ENCODE measurements at regions of chr6 and their contacts with region 1.

Region 1: GRCh38 chr6:26607434-26608230 is 10.9 kb downstream of the ABT1 start:
- DNase-seq: peak; percentile 51
- H3K4me3 Mint-ChIP-seq: peak overlapping the region; percentile 28
- H3K27ac Mint-ChIP-seq: no peak overlapping the region
- H3K4me1 Mint-ChIP-seq: peaks cover 16% of the 10 kb centered on the region
- H3K27me3 Mint-ChIP-seq: peaks cover 16% of the 10 kb centered on the region

Region 2: DNA sequence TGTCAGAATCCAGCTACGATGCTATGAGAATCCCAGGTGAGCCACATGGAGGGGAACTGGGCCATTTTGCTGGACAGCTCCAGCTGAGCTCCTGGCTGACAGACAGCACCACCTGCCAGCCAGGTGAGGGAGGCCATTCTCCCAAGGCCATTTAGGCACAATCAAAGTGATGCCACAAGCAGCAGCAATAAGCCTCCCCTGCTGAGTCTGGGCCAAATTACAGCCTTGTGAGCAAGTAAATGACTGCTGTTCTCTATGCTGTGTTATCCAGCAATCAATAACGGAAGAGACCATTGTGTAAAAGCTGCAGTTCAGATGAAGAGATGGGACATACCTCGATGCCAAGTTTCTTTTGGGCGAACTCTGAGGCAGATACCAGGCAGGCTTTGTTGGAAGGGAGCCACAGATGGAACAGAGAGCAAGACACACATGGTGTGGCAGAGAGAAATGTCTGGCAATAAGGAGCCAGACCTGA is 969.6 kb before region 1 on chr6:
- intact Hi-C with region 1: no loop called
- DNase-seq: no peak
- H3K4me3 Mint-ChIP-seq: no peak overlapping the region
- H3K27ac Mint-ChIP-seq: no peak overlapping the region
- H3K4me1 Mint-ChIP-seq: no peaks in the 10 kb centered on the region
- H3K27me3 Mint-ChIP-seq: peaks cover 12% of the 10 kb centered on the region

Region 3: GRCh38 chr6:26270903-26271667 is 336.5 kb before region 1 on chr6:
- intact Hi-C with region 1: no loop called
- DNase-seq: peak; percentile 79
- H3K4me3 Mint-ChIP-seq: no peak overlapping the region
- H3K27ac Mint-ChIP-seq: no peak overlapping the region
- H3K4me1 Mint-ChIP-seq: peaks cover 37% of the 10 kb centered on the region
- H3K27me3 Mint-ChIP-seq: no peaks in the 10 kb centered on the region

Region 4: GRCh38 chr6:27078734-27079357 is 471.2 kb after region 1 on chr6:
- intact Hi-C with region 1: loop called (anchors 1 kb)
- DNase-seq: peak; percentile 15
- H3K4me3 Mint-ChIP-seq: peak overlapping the region; percentile 61
- H3K27ac Mint-ChIP-seq: no peak overlapping the region
- H3K4me1 Mint-ChIP-seq: peaks cover 11% of the 10 kb centered on the region
- H3K27me3 Mint-ChIP-seq: peaks cover 43% of the 10 kb centered on the region

Measured in activated T-helper 2 cell treated with anti-CD3 and anti-CD28 coated beads, Interferon-gamma antibody, Interleukin-2, Interleukin-4, amounts not matched to agents 10 μg/mL and 5 μg/mL and 100 μg/mL, durations not matched to agents 14 hours and 24 hours and 36 hours (primary cell).